ENCODE measurements at regions of chr4 and their contacts with region 1.

Region 1: GRCh38 chr4:73142995-73143547 is 73.6 kb upstream of the COX18 start:
- DNase-seq: no peak
- ATAC-seq: no peak
- H3K4me3 ChIP-seq: no peak overlapping the region
- H3K4me3 Mint-ChIP-seq: no peak overlapping the region
- H3K27ac ChIP-seq: no peak overlapping the region
- H3K27ac Mint-ChIP-seq: peak overlapping the region in 2 of 9 donors; percentile 28 to 42
- H3K4me1 ChIP-seq: no peaks in the 10 kb centered on the region
- H3K4me1 Mint-ChIP-seq: peaks cover 0 to 20% (median 6%) of the 10 kb centered on the region in 7 donors
- H3K27me3 ChIP-seq: no peaks in the 10 kb centered on the region
- H3K27me3 Mint-ChIP-seq: no peaks in the 10 kb centered on the region

Region 2: GRCh38 chr4:72701987-72702819 is 440.9 kb before region 1 on chr4:
- CTCF ChIA-PET with region 1: no interaction called
- POLR2A ChIA-PET with region 1: no interaction called
- intact Hi-C with region 1: loop called in 1 of 2 experiments (anchors 10 kb)
- DNase-seq: peak in 6 of 9 donors; percentile 10 to 32 (median 22)
- ATAC-seq: peak; percentile 56
- H3K4me3 ChIP-seq: no peak overlapping the region
- H3K4me3 Mint-ChIP-seq: peak overlapping the region in 9 of 10 donors; percentile 42 to 85 (median 83)
- H3K27ac ChIP-seq: no peak overlapping the region
- H3K27ac Mint-ChIP-seq: peak overlapping the region in 2 of 9 donors; percentile 3 to 71
- H3K4me1 ChIP-seq: no peaks in the 10 kb centered on the region
- H3K4me1 Mint-ChIP-seq: peaks cover 0 to 6% (median 0%) of the 10 kb centered on the region in 7 donors
- H3K27me3 ChIP-seq: no peaks in the 10 kb centered on the region
- H3K27me3 Mint-ChIP-seq: peaks cover 0 to 14% (median 6%) of the 10 kb centered on the region in 5 donors

Region 3: DNA sequence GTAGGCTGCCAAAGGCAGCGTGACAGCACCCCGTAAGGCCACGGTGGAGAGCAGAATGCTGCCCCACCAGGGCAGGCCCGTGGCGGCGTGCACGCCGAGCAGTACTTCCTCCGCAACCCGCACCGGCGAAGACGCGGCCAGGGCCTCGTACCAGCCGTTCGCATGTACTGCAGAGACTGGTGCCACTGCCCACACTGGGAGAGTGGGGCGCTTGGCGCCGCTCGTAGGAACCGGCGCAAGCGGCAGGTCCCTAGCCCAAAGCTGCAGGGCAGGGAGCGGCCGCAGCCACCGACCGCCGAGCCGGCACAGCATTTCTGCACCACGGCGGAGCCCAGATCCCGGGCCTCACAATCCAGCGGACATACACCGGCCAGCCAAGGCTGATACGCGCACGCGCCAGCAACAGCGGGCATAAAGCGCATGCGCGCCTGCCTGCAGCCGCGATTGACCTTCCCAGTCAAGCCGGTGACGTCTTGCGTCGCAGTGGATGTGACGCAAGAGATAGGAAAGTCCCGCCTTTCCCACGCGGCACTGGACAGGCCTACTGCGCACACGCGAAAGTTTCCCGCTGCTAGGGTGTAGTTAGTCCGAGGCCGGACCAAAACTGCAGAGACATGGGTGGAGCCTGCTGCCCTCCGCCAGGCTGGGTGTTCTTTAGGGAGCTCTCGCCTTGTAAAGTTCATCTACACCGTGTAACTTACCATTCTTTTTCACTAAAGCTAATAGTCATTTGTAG is 73.6 kb before region 1 on chr4 and contains the start of gene COX18:
- CTCF ChIA-PET with region 1: no interaction called
- POLR2A ChIA-PET with region 1: no interaction called
- intact Hi-C with region 1: loop called in 1 of 2 experiments (anchors 5 kb)
- DNase-seq: peak; percentile 90 to 93 (median 91)
- ATAC-seq: peak; percentile 87
- H3K4me3 ChIP-seq: peak within 1 kb of the TSS; percentile 79
- H3K4me3 Mint-ChIP-seq: peak within 1 kb of the TSS; percentile 86 to 97 (median 90)
- H3K27ac ChIP-seq: peak within 1 kb of the TSS; percentile 98
- H3K27ac Mint-ChIP-seq: peak within 1 kb of the TSS; percentile 93 to 99 (median 98)
- H3K4me1 ChIP-seq: peaks cover 25 to 29% of the 10 kb centered on the region in 2 donors
- H3K4me1 Mint-ChIP-seq: peaks cover 24 to 46% (median 39%) of the 10 kb centered on the region in 7 donors
- H3K27me3 ChIP-seq: no peaks in the 10 kb centered on the region
- H3K27me3 Mint-ChIP-seq: no peaks in the 10 kb centered on the region
- total RNA-seq, gene COX18: 11.1 to 18.4 (median 14.0) TPM

Region 4: DNA sequence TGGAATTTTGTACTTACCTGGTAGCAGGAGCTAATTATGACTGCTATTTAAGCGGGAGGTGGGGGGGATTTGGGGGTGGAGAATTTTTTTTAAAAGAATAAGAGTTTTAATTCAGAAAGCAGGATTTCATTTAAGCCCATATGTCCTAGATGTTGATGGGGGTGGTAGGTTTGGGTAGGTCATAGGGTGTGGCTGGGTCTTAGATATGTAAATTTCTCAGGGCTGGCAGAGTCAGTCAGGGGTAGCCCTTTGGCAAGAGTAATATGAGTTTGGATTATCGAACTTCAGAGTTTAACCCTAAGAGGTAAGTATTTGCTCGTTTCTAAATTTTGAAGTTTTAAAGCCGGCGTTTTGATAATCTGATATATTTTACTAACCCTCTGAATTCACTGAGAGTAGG is 38.4 kb before region 1 on chr4:
- CTCF ChIA-PET with region 1: no interaction called
- POLR2A ChIA-PET with region 1: no interaction called
- intact Hi-C with region 1: loop called in 1 of 2 experiments (anchors 5 kb)
- DNase-seq: no peak
- ATAC-seq: no peak
- H3K4me3 ChIP-seq: no peak overlapping the region
- H3K4me3 Mint-ChIP-seq: no peak overlapping the region
- H3K27ac ChIP-seq: no peak overlapping the region
- H3K27ac Mint-ChIP-seq: no peak overlapping the region
- H3K4me1 ChIP-seq: no peaks in the 10 kb centered on the region
- H3K4me1 Mint-ChIP-seq: peaks cover 0 to 13% (median 1%) of the 10 kb centered on the region in 7 donors
- H3K27me3 ChIP-seq: no peaks in the 10 kb centered on the region
- H3K27me3 Mint-ChIP-seq: no peaks in the 10 kb centered on the region

Region 5: DNA sequence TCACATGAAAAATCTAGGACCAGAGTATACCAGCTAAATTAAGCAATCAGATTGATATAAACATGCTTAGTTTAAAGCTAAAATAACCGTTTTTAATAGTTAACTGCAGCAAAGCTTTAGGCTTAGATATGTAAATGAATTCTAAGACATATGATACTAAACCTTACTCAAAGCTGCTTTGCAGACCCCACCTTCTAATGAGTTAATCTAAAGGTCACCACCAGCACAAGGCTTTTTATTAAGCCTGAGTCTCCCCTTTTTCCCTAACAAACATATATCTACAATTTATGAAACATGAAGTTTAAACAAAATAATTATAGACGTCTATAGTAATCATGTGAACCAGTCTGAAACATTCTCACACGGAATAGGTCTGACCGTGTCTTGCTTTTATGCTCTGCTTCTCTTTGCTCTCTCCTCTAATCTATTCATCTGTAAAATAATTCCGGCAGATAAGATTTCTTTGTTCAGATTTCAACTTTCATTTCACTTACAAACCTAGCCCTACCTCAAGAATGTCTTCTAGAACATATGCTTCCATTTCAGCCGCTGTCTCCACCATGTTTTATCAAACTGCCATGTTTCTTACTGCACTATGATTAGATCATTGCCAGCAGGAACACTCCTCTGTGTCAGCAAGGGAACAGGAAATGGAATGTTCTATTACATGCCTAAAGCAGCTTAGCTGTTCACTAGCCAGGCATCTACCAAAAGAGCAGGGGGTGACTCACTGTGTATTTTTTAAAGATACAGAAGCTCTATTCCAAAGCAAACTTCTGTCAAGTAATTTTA is 79.6 kb after region 1 on chr4:
- CTCF ChIA-PET with region 1: no interaction called
- POLR2A ChIA-PET with region 1: no interaction called
- intact Hi-C with region 1: loop called in 1 of 2 experiments (anchors 2 kb)
- DNase-seq: peak in 8 of 9 donors; percentile 39 to 90 (median 82)
- ATAC-seq: peak; percentile 100
- H3K4me3 ChIP-seq: peak overlapping the region; percentile 62
- H3K4me3 Mint-ChIP-seq: no peak overlapping the region
- H3K27ac ChIP-seq: peak overlapping the region; percentile 86
- H3K27ac Mint-ChIP-seq: no peak overlapping the region
- H3K4me1 ChIP-seq: peaks cover 9 to 18% of the 10 kb centered on the region in 2 donors
- H3K4me1 Mint-ChIP-seq: peaks cover 19 to 62% (median 54%) of the 10 kb centered on the region in 7 donors
- H3K27me3 ChIP-seq: no peaks in the 10 kb centered on the region
- H3K27me3 Mint-ChIP-seq: no peaks in the 10 kb centered on the region

Measured in naive thymus-derived CD4-positive, alpha-beta T cell (primary cell).